B cell (primary cell): ENCODE measurements at regions of chr5 and their contacts with region 1.

Region 1: GRCh38 chr5:91419571-91420537 is 36.7 kb upstream of the ARRDC3 start:
- DNase-seq: peak; percentile 72
- ATAC-seq: no peak
- H3K4me3 ChIP-seq: no peak overlapping the region
- H3K4me3 Mint-ChIP-seq: no peak overlapping the region
- H3K27ac ChIP-seq: no peak overlapping the region
- H3K27ac Mint-ChIP-seq: no peak overlapping the region
- H3K4me1 ChIP-seq: no peaks in the 10 kb centered on the region
- H3K4me1 Mint-ChIP-seq: no peaks in the 10 kb centered on the region
- H3K27me3 ChIP-seq: no peaks in the 10 kb centered on the region
- H3K27me3 Mint-ChIP-seq: no peaks in the 10 kb centered on the region
- CTCF ChIP-seq: peak; percentile 89

Region 2: GRCh38 chr5:90873033-90873517 is 546.8 kb before region 1 on chr5:
- CTCF ChIA-PET with region 1: interaction called, 201 read pairs
- POLR2A ChIA-PET with region 1: no interaction called
- intact Hi-C with region 1: no loop called
- DNase-seq: no peak
- ATAC-seq: no peak
- H3K4me3 ChIP-seq: no peak overlapping the region
- H3K4me3 Mint-ChIP-seq: no peak overlapping the region
- H3K27ac ChIP-seq: no peak overlapping the region
- H3K27ac Mint-ChIP-seq: no peak overlapping the region
- H3K4me1 ChIP-seq: no peaks in the 10 kb centered on the region
- H3K4me1 Mint-ChIP-seq: no peaks in the 10 kb centered on the region
- H3K27me3 ChIP-seq: peaks cover 0 to 3% (median 1%) of the 10 kb centered on the region in 4 experiments
- H3K27me3 Mint-ChIP-seq: peaks cover 26% of the 10 kb centered on the region
- CTCF ChIP-seq: no peak

Region 3: GRCh38 chr5:91101600-91102379 is 318.1 kb before region 1 on chr5:
- CTCF ChIA-PET with region 1: interaction called, 54 read pairs
- POLR2A ChIA-PET with region 1: no interaction called
- intact Hi-C with region 1: loop called (anchors 1 kb)
- DNase-seq: peak; percentile 65
- ATAC-seq: peak; percentile 84
- H3K4me3 ChIP-seq: no peak overlapping the region
- H3K4me3 Mint-ChIP-seq: no peak overlapping the region
- H3K27ac ChIP-seq: no peak overlapping the region
- H3K27ac Mint-ChIP-seq: no peak overlapping the region
- H3K4me1 ChIP-seq: no peaks in the 10 kb centered on the region
- H3K4me1 Mint-ChIP-seq: no peaks in the 10 kb centered on the region
- H3K27me3 ChIP-seq: no peaks in the 10 kb centered on the region
- H3K27me3 Mint-ChIP-seq: peaks cover 4% of the 10 kb centered on the region
- CTCF ChIP-seq: peak; percentile 67

Region 4: GRCh38 chr5:91225848-91226686 is 193.8 kb before region 1 on chr5:
- CTCF ChIA-PET with region 1: interaction called, 33 read pairs
- POLR2A ChIA-PET with region 1: no interaction called
- intact Hi-C with region 1: loop called (anchors 1 kb)
- DNase-seq: peak; percentile 59
- ATAC-seq: peak; percentile 63
- H3K4me3 ChIP-seq: no peak overlapping the region
- H3K4me3 Mint-ChIP-seq: no peak overlapping the region
- H3K27ac ChIP-seq: no peak overlapping the region
- H3K27ac Mint-ChIP-seq: no peak overlapping the region
- H3K4me1 ChIP-seq: no peaks in the 10 kb centered on the region
- H3K4me1 Mint-ChIP-seq: no peaks in the 10 kb centered on the region
- H3K27me3 ChIP-seq: peaks cover 0 to 4% (median 2%) of the 10 kb centered on the region in 4 experiments
- H3K27me3 Mint-ChIP-seq: peaks cover 9% of the 10 kb centered on the region
- CTCF ChIP-seq: peak; percentile 62

Region 5: DNA sequence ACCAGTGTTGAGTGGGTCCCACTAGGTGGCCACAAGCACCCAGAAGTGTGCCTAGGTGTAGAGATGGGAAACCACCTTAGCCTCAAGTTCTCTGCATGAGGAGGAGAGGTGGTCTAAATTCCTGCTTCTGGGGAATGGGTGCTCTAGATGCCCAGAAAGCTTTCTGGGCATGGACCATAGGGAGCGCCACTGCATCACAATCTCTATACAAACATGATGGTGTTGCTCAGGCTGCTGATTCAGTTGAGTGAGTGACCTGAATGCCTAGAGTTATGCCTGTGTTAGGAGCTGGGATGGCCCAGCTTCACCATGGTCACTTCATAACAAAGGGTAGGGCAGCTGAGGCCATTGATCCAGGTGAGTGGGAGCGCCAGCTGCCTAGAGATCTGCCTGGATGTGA is 631.1 kb after region 1 on chr5:
- CTCF ChIA-PET with region 1: no interaction called
- POLR2A ChIA-PET with region 1: no interaction called
- intact Hi-C with region 1: no loop called
- DNase-seq: no peak
- ATAC-seq: no peak
- H3K4me3 ChIP-seq: no peak overlapping the region
- H3K4me3 Mint-ChIP-seq: no peak overlapping the region
- H3K27ac ChIP-seq: no peak overlapping the region
- H3K27ac Mint-ChIP-seq: no peak overlapping the region
- H3K4me1 ChIP-seq: no peaks in the 10 kb centered on the region
- H3K4me1 Mint-ChIP-seq: no peaks in the 10 kb centered on the region
- H3K27me3 ChIP-seq: no peaks in the 10 kb centered on the region
- H3K27me3 Mint-ChIP-seq: no peaks in the 10 kb centered on the region
- CTCF ChIP-seq: no peak